ENCODE measurements at regions of chr9 and their contacts with region 1.

Region 1: GRCh38 chr9:87711857-87712800 is 13.8 kb upstream of the CTSL start:
- DNase-seq: no peak
- ATAC-seq: peak; percentile 39
- H3K4me3 ChIP-seq: no peak overlapping the region
- H3K4me3 Mint-ChIP-seq: no peak overlapping the region
- H3K27ac ChIP-seq: no peak overlapping the region
- H3K27ac Mint-ChIP-seq: peak overlapping the region in 3 of 9 donors; percentile 6 to 57 (median 43)
- H3K4me1 ChIP-seq: peaks cover 0 to 29% of the 10 kb centered on the region in 2 donors
- H3K4me1 Mint-ChIP-seq: peaks cover 28 to 55% (median 43%) of the 10 kb centered on the region in 7 donors
- H3K27me3 ChIP-seq: no peaks in the 10 kb centered on the region
- H3K27me3 Mint-ChIP-seq: peaks cover 0 to 31% (median 0%) of the 10 kb centered on the region in 5 donors

Region 2: GRCh38 chr9:87725900-87726709 is 14.0 kb after region 1 on chr9 and contains the start of gene CTSL:
- CTCF ChIA-PET with region 1: interaction called, 3 read pairs
- POLR2A ChIA-PET with region 1: interaction called, 51 read pairs
- intact Hi-C with region 1: loop called in 1 of 2 experiments (anchors 1 kb)
- DNase-seq: peak; percentile 30 to 65 (median 46)
- ATAC-seq: peak; percentile 82
- H3K4me3 ChIP-seq: peak within 1 kb of the TSS; percentile 77
- H3K4me3 Mint-ChIP-seq: peak within 1 kb of the TSS; percentile 85 to 97 (median 93)
- H3K27ac ChIP-seq: peak within 1 kb of the TSS; percentile 56
- H3K27ac Mint-ChIP-seq: peak within 1 kb of the TSS; percentile 63 to 98 (median 91)
- H3K4me1 ChIP-seq: no peaks in the 10 kb centered on the region
- H3K4me1 Mint-ChIP-seq: peaks cover 10 to 55% (median 31%) of the 10 kb centered on the region in 7 donors
- H3K27me3 ChIP-seq: no peaks in the 10 kb centered on the region
- H3K27me3 Mint-ChIP-seq: peaks cover 0 to 43% (median 0%) of the 10 kb centered on the region in 5 donors
- total RNA-seq, gene CTSL: 3.7 to 67.9 (median 14.9) TPM

Region 3: GRCh38 chr9:87996234-87996860 is 284.2 kb after region 1 on chr9:
- CTCF ChIA-PET with region 1: no interaction called
- POLR2A ChIA-PET with region 1: no interaction called
- intact Hi-C with region 1: no loop called
- DNase-seq: no peak
- ATAC-seq: no peak
- H3K4me3 ChIP-seq: no peak overlapping the region
- H3K4me3 Mint-ChIP-seq: no peak overlapping the region
- H3K27ac ChIP-seq: no peak overlapping the region
- H3K27ac Mint-ChIP-seq: no peak overlapping the region
- H3K4me1 ChIP-seq: no peaks in the 10 kb centered on the region
- H3K4me1 Mint-ChIP-seq: no peaks in the 10 kb centered on the region
- H3K27me3 ChIP-seq: no peaks in the 10 kb centered on the region
- H3K27me3 Mint-ChIP-seq: peaks cover 14 to 41% (median 22%) of the 10 kb centered on the region in 5 donors

Measured in naive thymus-derived CD4-positive, alpha-beta T cell (primary cell).